GM12878 (cell line): ENCODE measurements at regions of chr11 and their contacts with region 1.

Region 1: GRCh38 chr11:13335319-13335718 is 57.7 kb downstream of the BMAL1 start:
- DNase-seq: no peak
- ATAC-seq: peak; percentile 45
- H3K4me3 ChIP-seq: no peak overlapping the region
- H3K27ac ChIP-seq: no peak overlapping the region
- H3K4me1 ChIP-seq: peaks cover 39% of the 10 kb centered on the region
- H3K27me3 ChIP-seq: no peaks in the 10 kb centered on the region
- CTCF ChIP-seq: peak; percentile 83 to 89 (median 85)
- EP300 ChIP-seq: no peak
- POLR2A ChIP-seq: no peak
- RAD21 ChIP-seq: peak; percentile 87

Region 2: GRCh38 chr11:13210424-13210823 is 124.9 kb before region 1 on chr11:
- CTCF ChIA-PET with region 1: interaction called, 81 read pairs
- POLR2A ChIA-PET with region 1: no interaction called
- RAD21 ChIA-PET with region 1: interaction called, 36 read pairs
- SMC1A ChIA-PET with region 1: interaction called, 29 read pairs
- in situ Hi-C with region 1: no loop called
- intact Hi-C with region 1: loop called (anchors 2 kb)
- DNase-seq: no peak
- ATAC-seq: peak; percentile 66
- H3K4me3 ChIP-seq: no peak overlapping the region
- H3K27ac ChIP-seq: no peak overlapping the region
- H3K4me1 ChIP-seq: peaks cover 12% of the 10 kb centered on the region
- H3K27me3 ChIP-seq: no peaks in the 10 kb centered on the region; a peak in 1 of 4 replicates
- CTCF ChIP-seq: peak; percentile 32 to 49 (median 47); a peak in 5 of 6 replicates
- EP300 ChIP-seq: no peak
- POLR2A ChIP-seq: no peak
- RAD21 ChIP-seq: peak; percentile 74

Region 3: DNA sequence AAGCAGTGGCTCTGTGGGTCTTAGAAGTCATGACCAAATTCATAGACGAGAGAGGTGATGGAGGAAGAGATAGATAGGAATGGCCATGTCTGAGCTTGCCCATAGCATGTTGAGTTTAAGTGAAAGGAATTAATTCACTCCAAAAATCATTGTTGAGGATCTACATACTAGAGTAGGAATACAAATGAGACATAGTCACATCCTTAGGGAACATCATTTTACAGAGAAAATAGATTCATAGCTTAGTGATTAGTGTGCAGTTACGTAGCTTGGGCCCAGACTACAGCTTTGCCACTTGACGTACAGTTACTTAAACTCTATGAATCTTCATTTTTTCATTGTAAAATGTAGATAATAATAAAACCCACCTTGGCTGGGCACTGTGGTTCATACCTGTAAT is 79.1 kb before region 1 on chr11:
- CTCF ChIA-PET with region 1: interaction called, 253 read pairs
- POLR2A ChIA-PET with region 1: interaction called, 6 read pairs
- RAD21 ChIA-PET with region 1: interaction called, 171 read pairs
- SMC1A ChIA-PET with region 1: interaction called, 132 read pairs
- in situ Hi-C with region 1: no loop called
- intact Hi-C with region 1: loop called (anchors 2 kb)
- DNase-seq: no peak
- ATAC-seq: no peak
- H3K4me3 ChIP-seq: no peak overlapping the region
- H3K27ac ChIP-seq: no peak overlapping the region
- H3K4me1 ChIP-seq: no peaks in the 10 kb centered on the region
- H3K27me3 ChIP-seq: no peaks in the 10 kb centered on the region
- CTCF ChIP-seq: no peak
- EP300 ChIP-seq: no peak
- POLR2A ChIP-seq: no peak
- RAD21 ChIP-seq: no peak

Region 4: DNA sequence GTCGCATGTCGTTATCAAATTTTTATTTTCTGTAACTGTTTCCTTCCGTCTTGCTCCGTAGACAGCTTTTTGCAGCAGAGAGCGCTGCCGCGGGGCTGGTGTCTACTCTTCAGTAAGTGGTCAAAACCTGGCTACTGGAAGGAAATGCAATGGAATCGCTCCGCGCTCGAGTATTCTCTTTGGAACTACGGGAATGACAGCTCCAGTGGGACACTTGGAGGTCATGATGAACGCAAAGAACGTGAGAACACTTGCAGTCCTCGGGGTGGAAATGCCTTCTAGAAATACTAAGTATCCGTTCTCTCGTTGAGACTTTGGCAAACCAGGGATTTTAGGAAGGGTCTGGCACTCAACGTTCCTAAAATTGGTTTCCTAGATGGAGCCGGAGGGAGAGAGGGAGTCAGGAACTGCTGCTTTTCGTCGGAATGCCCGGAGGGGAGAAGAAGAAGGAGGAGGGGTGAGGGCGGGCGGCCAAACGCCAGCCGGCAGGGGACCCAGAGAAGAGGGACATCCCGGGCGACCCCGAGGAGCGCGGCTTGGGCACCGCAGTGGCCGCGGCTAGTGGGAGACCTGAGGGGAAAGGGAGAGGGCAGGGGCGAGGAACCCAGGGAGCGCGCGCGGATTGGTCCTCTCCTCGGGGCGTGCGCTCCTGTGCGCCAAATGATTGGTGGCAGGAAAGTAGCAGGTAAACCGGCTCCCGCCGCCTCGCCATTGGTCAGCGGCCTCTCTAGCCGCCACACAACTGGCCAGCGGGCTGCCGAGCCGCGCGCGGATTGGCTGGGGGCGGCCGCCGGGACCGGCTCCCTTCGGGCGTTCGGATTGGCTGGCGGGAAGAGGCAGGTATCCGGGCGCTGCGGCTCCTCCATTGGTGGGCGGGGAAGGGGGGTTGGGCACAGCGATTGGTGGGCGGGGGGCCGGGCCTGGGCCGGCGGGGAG is 58.2 kb before region 1 on chr11:
- CTCF ChIA-PET with region 1: interaction called, 69 read pairs
- POLR2A ChIA-PET with region 1: interaction called, 20 read pairs
- RAD21 ChIA-PET with region 1: interaction called, 52 read pairs
- SMC1A ChIA-PET with region 1: interaction called, 77 read pairs
- in situ Hi-C with region 1: no loop called
- intact Hi-C with region 1: loop called (anchors 2 kb)
- DNase-seq: peak; percentile 85
- ATAC-seq: peak; percentile 89
- H3K4me3 ChIP-seq: peak overlapping the region; percentile 74
- H3K27ac ChIP-seq: no peak overlapping the region
- H3K4me1 ChIP-seq: peaks cover 2% of the 10 kb centered on the region; the same call in 1 of the 2 replicates
- H3K27me3 ChIP-seq: peaks cover 0 to 6% of the 10 kb centered on the region in 2 experiments; a peak in 1 of 4 replicates
- CTCF ChIP-seq: no peak
- EP300 ChIP-seq: no peak
- POLR2A ChIP-seq: peak; percentile 58; the same call in 1 of the 2 replicates
- RAD21 ChIP-seq: no peak

Region 5: DNA sequence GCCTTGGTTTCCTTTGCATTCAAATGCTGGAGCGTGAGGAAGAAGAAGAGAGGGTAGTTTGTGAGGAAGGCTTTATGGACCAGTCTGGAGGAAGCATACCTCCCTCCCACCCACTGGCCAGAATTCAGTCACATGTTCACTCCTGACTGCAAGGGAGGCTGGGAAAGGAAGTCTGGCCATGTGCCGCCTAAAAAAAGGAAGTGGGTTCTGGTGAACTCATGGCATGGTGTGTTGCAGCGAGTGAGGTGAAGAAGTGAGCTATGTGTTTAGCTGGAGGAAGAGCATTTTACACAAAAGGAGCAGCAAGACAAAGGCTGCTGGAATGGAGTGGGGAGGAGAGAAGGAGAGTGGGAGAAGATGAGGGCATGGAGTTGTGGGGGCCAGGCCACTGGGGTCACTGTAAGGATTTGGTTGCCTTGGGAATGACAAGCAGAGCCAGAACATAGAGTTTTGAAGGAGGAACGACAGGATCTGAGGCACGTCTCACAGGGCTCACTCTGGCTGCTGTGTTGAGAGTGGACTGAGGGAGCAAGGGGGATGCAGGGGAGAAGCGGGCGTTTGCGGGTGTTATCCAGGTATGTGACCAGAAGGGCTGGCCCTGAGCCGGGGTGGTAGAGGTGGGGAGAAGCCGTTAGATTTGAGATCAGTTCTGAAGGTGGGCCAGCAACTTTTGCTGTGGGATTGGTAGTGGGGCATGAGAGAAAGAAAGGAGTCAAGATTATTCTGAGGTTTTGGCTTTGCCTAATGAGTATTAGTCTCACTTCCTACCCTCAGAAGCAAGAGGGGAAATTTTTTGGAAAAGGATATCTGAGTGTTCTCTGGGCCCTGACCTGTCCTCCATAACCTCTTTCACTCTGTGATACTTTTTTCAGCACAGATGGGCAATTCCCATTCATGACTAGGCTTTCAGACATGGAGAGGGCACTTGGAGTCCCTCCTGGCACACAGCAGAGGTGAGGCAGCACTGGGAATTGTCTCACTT is 31.4 kb before region 1 on chr11:
- CTCF ChIA-PET with region 1: interaction called, 10 read pairs
- POLR2A ChIA-PET with region 1: interaction called, 3 read pairs
- RAD21 ChIA-PET with region 1: interaction called, 5 read pairs
- SMC1A ChIA-PET with region 1: interaction called, 107 read pairs
- in situ Hi-C with region 1: no loop called
- intact Hi-C with region 1: no loop called
- DNase-seq: no peak
- ATAC-seq: peak; percentile 78
- H3K4me3 ChIP-seq: no peak overlapping the region
- H3K27ac ChIP-seq: no peak overlapping the region; the same call in 1 of the 2 replicates
- H3K4me1 ChIP-seq: peaks cover 16% of the 10 kb centered on the region
- H3K27me3 ChIP-seq: no peaks in the 10 kb centered on the region
- CTCF ChIP-seq: no peak
- EP300 ChIP-seq: no peak
- POLR2A ChIP-seq: no peak
- RAD21 ChIP-seq: no peak

Region 6: DNA sequence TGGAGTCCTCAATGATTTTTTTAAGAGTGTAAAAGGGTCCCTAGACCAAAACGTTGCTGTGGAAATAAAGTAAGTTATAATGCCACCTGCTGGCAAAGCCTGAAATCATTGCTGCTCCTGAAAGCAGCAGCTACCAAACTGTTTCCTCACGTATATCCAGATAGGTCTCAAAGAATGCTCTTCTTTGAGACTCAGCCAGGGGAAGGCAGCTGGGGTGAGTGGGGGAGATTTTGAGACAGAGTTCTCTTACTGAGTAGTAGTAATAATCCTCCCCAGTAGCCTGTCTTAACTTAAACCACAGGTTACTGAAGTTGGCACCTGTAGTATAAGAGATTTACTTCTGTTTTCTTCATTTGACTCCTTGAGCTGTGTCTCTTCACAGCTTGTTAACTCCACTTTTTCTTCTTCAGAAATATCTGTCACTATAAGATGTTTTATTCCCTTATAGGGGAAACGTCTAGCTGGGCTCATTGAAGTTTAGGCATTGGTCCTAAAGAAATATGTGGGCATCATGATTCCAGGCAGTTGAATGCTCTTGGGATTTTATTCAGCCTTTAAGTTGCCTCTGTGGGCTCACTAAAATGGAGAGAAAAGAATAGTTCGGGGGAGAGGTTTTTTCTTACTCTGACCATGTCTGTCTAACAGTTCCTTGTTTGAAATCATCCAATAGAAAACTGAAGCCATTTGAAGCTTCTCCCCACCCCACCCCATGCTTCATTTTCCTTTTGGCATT is 49.8 kb after region 1 on chr11:
- CTCF ChIA-PET with region 1: interaction called, 17 read pairs
- POLR2A ChIA-PET with region 1: no interaction called
- RAD21 ChIA-PET with region 1: interaction called, 6 read pairs
- SMC1A ChIA-PET with region 1: interaction called, 3 read pairs
- in situ Hi-C with region 1: no loop called
- intact Hi-C with region 1: no loop called
- DNase-seq: peak; percentile 3
- ATAC-seq: peak; percentile 74
- H3K4me3 ChIP-seq: no peak overlapping the region
- H3K27ac ChIP-seq: no peak overlapping the region
- H3K4me1 ChIP-seq: no peaks in the 10 kb centered on the region
- H3K27me3 ChIP-seq: no peaks in the 10 kb centered on the region
- CTCF ChIP-seq: peak; percentile 58 to 69 (median 58)
- EP300 ChIP-seq: no peak
- POLR2A ChIP-seq: no peak
- RAD21 ChIP-seq: peak; percentile 58